Calu3 (cell line): ENCODE measurements at regions of chr1 and their contacts with region 1.

Region 1: DNA sequence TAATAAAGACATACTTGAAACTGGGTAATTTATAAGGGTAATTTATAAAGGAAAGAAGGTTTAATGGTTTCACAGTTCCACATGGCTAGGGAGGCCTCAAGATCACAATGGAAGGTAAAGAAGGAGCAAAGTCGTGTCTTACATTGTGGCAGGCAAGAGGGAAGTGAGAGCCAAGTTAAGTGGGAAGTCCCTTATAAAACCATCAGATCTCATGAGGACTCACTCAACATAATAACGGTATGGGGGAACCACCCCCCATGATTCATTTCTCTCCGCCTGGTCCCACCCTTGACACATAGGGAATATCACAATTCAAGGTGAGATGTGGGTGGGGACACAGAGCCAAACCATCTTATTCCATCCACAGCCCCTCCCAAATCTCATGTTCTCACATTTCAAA is 76.8 kb upstream of the ZNF678 start:
- DNase-seq: no peak
- H3K4me3 Mint-ChIP-seq: no peak overlapping the region
- H3K27ac Mint-ChIP-seq: no peak overlapping the region
- H3K4me1 Mint-ChIP-seq: no peaks in the 10 kb centered on the region
- H3K27me3 Mint-ChIP-seq: peaks cover 10% of the 10 kb centered on the region
- CTCF ChIP-seq: no peak

Region 2: DNA sequence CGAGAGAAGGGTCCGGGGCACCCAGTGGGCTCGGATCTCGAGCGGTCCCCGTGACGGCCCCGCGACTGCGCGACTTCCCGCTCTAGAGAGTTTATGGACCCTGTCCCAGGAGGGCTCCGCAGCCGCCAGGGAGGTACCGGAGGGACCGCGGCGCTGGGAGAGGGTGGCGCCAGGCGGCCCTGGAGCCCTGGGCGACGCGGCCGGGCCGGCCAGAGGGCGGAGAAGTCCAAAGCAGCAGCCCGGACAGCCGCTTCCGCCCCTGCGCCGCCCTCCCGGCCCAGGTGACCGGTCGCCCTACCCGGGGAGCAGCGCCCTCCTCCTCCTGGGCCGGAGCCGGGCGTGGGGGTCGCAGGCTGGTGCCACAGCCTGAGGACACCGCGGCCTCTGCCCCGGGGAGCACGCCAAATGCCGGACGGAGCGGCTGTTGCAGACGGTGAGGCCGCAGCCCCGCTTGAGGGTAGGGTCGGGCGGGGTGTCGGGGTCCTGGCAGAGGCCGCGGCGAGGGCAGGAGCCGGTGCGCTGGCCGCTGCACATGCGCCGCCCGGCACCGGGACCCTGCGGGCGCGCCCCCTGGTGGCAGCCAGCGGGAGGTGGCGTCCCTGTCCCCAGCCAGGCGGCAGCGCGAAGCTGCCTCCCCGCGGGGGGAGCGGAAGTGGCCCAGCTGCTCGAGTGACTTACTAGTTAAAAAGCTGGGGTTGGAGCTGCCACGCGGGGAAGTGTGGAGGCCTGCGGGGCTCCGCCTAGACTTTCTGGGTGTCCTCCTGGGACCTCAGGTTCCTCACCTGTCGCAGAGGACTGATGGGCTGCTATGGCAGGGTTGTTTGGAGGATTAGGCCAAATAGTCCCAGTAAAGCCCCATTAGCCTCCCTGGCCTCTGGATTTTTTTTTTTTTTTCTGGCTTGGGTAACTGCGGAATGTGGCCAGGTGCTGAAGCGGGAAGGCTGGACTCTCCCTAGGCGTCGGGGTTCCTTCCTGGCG is 55.9 kb after region 1 on chr1:
- CTCF ChIA-PET with region 1: no interaction called
- intact Hi-C with region 1: loop called (anchors 2 kb)
- DNase-seq: peak; percentile 94
- H3K4me3 Mint-ChIP-seq: peak overlapping the region; percentile 51
- H3K27ac Mint-ChIP-seq: peak overlapping the region; percentile 47
- H3K4me1 Mint-ChIP-seq: no peaks in the 10 kb centered on the region
- H3K27me3 Mint-ChIP-seq: no peaks in the 10 kb centered on the region
- CTCF ChIP-seq: peak; percentile 96

Region 3: DNA sequence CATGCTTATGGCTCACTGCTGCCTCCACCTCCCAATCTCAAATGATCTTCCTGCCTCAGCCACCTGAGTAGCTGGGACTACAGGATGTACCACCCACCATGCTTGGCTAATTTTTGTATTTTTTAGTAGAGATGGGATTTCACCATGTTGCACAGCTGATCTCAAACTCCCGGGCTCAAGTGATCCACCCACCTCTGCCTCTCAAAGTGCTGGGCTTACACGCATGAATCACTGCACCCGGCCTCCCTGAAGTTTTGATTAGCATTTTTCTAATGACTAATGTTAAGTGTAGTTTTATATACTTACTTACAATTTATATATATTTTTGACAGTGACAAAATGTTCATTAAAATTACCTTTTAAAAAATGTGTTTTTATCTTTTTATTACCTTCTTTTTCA is 117.9 kb after region 1 on chr1:
- CTCF ChIA-PET with region 1: no interaction called
- intact Hi-C with region 1: no loop called
- DNase-seq: no peak
- H3K4me3 Mint-ChIP-seq: no peak overlapping the region
- H3K27ac Mint-ChIP-seq: no peak overlapping the region
- H3K4me1 Mint-ChIP-seq: peaks cover 11% of the 10 kb centered on the region
- H3K27me3 Mint-ChIP-seq: no peaks in the 10 kb centered on the region
- CTCF ChIP-seq: no peak

Region 4: DNA sequence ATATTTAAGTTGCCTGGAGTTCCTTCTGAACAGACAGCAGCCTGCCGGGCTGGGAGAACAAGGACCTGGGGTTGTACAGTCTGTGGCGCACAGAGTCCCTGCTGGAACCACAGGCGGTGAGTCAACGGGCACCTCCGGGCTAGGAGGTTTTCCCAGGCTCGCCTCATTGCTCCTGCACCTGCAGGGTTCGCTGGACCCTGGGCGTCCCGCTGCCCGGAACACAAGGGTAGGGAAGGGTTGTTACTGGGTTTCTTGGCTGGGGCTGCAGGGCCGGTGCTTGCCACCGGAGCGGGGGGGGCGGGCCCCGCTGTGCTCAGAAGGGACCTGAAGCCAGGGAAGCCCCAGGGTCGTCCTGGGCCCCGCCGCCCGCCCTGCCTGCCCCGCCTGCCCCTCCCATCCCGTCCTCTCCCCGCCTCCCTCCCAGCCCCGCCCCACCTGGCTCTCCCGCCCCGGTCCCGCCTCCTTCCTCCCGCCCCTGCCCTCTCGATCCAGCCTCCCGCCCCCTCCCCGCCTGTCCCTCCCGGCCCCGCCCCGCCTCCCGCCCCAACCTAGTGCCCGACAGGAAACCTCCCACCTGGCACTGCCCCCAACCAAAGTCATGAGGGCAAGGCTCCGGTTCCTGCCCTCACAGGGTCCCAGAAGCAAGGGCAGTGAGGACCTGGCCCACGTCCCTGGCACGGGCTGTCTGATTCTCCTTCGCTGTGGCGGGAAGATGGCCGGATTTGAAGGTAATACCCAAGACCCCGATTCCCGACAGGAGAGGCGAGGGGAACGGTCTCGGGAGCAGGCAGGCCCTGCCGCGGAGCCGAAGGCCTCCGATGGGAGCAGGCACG is 241.7 kb after region 1 on chr1:
- CTCF ChIA-PET with region 1: no interaction called
- intact Hi-C with region 1: loop called (anchors 1 kb)
- DNase-seq: peak; percentile 85
- H3K4me3 Mint-ChIP-seq: peak overlapping the region; percentile 79
- H3K27ac Mint-ChIP-seq: peak overlapping the region; percentile 78
- H3K4me1 Mint-ChIP-seq: peaks cover 8% of the 10 kb centered on the region
- H3K27me3 Mint-ChIP-seq: no peaks in the 10 kb centered on the region
- CTCF ChIP-seq: no peak

Region 5: DNA sequence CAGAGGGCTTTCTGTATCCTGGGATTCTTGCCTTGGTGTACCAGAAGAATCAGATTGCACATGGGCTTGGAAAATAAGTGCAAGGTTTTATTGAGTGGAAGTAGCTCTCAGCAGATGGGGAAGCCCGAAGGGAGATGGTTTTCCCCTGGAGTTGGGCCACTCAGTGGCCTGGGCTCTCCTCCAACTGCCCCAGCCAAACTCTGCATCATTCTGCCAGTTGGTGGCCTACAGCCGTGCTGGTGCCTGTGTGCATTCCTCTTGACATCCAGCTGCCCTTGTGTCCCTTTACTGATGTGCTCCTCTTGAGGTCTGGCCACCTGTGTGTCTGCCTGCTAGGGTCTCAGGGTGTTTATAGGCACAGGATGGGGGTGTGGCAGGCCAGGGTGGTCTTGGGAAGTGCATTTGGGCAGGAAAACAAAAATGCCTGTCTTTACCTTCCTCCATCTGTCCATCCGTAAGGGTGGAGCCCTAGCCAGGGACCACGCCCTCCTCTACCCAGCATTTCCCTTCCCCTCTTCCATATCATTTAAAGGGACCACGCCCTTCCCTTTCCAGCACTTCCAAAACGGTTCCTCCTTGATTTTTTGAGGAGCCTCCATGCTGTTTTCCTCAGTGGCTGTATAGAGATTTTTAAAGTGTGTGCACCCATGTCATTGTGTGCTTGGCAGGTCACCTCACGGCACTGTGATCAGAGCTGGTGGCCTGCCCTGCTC is 267.6 kb after region 1 on chr1:
- CTCF ChIA-PET with region 1: no interaction called
- intact Hi-C with region 1: loop called (anchors 2 kb)
- DNase-seq: no peak
- H3K4me3 Mint-ChIP-seq: no peak overlapping the region
- H3K27ac Mint-ChIP-seq: no peak overlapping the region
- H3K4me1 Mint-ChIP-seq: peaks cover 10% of the 10 kb centered on the region
- H3K27me3 Mint-ChIP-seq: no peaks in the 10 kb centered on the region
- CTCF ChIP-seq: no peak

Region 6: GRCh38 chr1:227946624-227947385 is 460.2 kb after region 1 on chr1:
- CTCF ChIA-PET with region 1: no interaction called
- intact Hi-C with region 1: loop called (anchors 1 kb)
- DNase-seq: peak; percentile 95
- H3K4me3 Mint-ChIP-seq: peak overlapping the region; percentile 68
- H3K27ac Mint-ChIP-seq: peak overlapping the region; percentile 2
- H3K4me1 Mint-ChIP-seq: peaks cover 13% of the 10 kb centered on the region
- H3K27me3 Mint-ChIP-seq: peaks cover 55% of the 10 kb centered on the region
- CTCF ChIP-seq: peak; percentile 87

Region 7: GRCh38 chr1:228515200-228515834 is 1028.8 kb after region 1 on chr1:
- CTCF ChIA-PET with region 1: no interaction called
- intact Hi-C with region 1: loop called (anchors 5 kb)
- DNase-seq: peak; percentile 53
- H3K4me3 Mint-ChIP-seq: no peak overlapping the region
- H3K27ac Mint-ChIP-seq: no peak overlapping the region
- H3K4me1 Mint-ChIP-seq: no peaks in the 10 kb centered on the region
- H3K27me3 Mint-ChIP-seq: peaks cover 81% of the 10 kb centered on the region
- CTCF ChIP-seq: peak; percentile 75